Heart left ventricle (tissue), 16 donors: ENCODE measurements at regions of chr2 and their contacts with region 1.

Region 1: GRCh38 chr2:133886735-133887660 is 318.7 kb upstream of the NCKAP5 start:
- DNase-seq: peak; percentile 63 to 80 (median 67)
- ATAC-seq: peak; percentile 29 to 86 (median 79)
- H3K4me3 ChIP-seq: no peak overlapping the region
- H3K27ac ChIP-seq: no peak overlapping the region
- H3K4me1 ChIP-seq: peaks cover 0 to 12% (median 2%) of the 10 kb centered on the region in 12 donors
- H3K27me3 ChIP-seq: peaks cover 0 to 3% (median 0%) of the 10 kb centered on the region in 9 donors
- CTCF ChIP-seq: peak; percentile 41 to 72 (median 58)
- POLR2A ChIP-seq: no peak

Region 2: DNA sequence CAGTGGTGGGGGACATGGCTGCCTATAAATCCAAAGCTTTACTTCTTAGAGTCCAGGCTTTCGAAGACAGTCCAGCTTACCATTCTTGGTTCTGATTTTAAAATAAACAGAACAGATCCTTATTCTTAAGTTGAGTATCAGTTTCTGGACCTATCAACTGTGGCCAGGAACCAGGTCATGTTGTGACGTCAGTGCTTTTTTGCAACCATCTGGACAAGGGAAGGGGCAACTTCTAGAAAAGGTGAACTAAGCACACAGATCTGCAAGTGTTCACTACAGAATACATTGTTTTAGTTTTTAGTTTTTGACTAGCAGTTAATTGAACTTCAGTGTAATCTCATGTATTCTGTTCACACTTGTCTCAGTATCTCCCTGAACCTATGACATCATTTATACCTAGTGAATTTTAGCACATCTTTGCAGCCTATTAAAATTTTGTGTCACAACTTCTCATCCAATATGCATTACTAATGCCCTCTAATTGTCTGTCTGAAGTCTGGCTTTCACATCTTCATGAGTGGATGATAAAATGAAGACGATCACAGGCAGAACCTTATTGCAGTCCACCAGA is 41.0 kb after region 1 on chr2:
- intact Hi-C with region 1: no loop called
- DNase-seq: no peak
- ATAC-seq: no peak
- H3K4me3 ChIP-seq: no peak overlapping the region
- H3K27ac ChIP-seq: no peak overlapping the region
- H3K4me1 ChIP-seq: no peaks in the 10 kb centered on the region
- H3K27me3 ChIP-seq: no peaks in the 10 kb centered on the region
- CTCF ChIP-seq: no peak
- POLR2A ChIP-seq: no peak

Region 3: GRCh38 chr2:133953524-133953923 is 66.5 kb after region 1 on chr2:
- intact Hi-C with region 1: no loop called
- DNase-seq: no peak
- ATAC-seq: no peak
- H3K4me3 ChIP-seq: no peak overlapping the region
- H3K27ac ChIP-seq: no peak overlapping the region
- H3K4me1 ChIP-seq: peaks cover 0 to 40% (median 7%) of the 10 kb centered on the region in 12 donors
- H3K27me3 ChIP-seq: no peaks in the 10 kb centered on the region
- CTCF ChIP-seq: no peak
- POLR2A ChIP-seq: no peak

Region 4: GRCh38 chr2:133993160-133993559 is 106.2 kb after region 1 on chr2:
- intact Hi-C with region 1: loop called in 2 of 10 experiments (anchors 10 kb)
- DNase-seq: peak in 2 of 5 donors; percentile 45 to 53
- ATAC-seq: peak; percentile 65 to 90 (median 76)
- H3K4me3 ChIP-seq: no peak overlapping the region
- H3K27ac ChIP-seq: peak overlapping the region in 7 of 12 donors; percentile 1 to 63 (median 38)
- H3K4me1 ChIP-seq: peaks cover 0 to 17% (median 0%) of the 10 kb centered on the region in 12 donors
- H3K27me3 ChIP-seq: no peaks in the 10 kb centered on the region
- CTCF ChIP-seq: no peak
- POLR2A ChIP-seq: no peak

Region 5: GRCh38 chr2:134104754-134105153 is 217.8 kb after region 1 on chr2:
- intact Hi-C with region 1: loop called in 3 of 10 experiments (anchors 5 to 10 kb)
- DNase-seq: no peak
- ATAC-seq: peak in 1 of 4 donors; percentile 20
- H3K4me3 ChIP-seq: no peak overlapping the region
- H3K27ac ChIP-seq: no peak overlapping the region
- H3K4me1 ChIP-seq: no peaks in the 10 kb centered on the region
- H3K27me3 ChIP-seq: no peaks in the 10 kb centered on the region
- CTCF ChIP-seq: no peak
- POLR2A ChIP-seq: no peak

Region 6: DNA sequence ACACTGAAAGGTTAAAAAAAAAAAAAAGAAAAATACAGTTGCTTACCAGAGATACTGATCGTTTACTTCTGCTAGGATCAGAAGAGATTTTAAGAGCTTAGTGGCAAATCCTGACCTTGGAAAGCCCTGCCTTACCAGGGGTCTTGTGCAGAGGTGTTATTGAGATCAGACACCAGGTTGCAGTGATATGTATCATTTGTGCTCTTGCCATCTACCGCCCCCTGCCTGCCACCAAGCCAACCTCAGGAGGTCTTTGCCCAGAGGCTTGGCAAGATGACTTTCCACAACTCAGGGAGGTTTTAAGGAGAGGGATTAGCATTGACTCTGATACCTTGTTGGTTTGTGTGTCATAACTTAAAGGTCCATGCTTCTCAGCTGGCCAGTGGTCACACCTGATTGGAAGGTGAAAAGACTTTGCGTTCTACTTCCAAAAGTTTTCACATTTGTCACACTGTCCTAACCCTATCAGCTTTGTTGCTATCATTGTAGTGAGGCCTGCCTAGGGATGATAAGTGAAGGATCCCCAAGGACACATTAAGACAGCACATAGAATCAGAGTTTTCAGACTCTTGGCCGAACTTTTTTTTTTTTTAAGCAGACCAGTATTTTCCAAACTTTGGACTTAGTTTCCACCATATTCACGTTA is 320.7 kb after region 1 on chr2:
- intact Hi-C with region 1: loop called in 1 of 10 experiments (anchors 10 kb)
- DNase-seq: peak in 4 of 5 donors; percentile 52 to 60 (median 58)
- ATAC-seq: peak; percentile 75 to 83 (median 77)
- H3K4me3 ChIP-seq: no peak overlapping the region
- H3K27ac ChIP-seq: peak overlapping the region in 7 of 12 donors; percentile 9 to 45 (median 17)
- H3K4me1 ChIP-seq: peaks cover 9 to 65% (median 49%) of the 10 kb centered on the region in 12 donors
- H3K27me3 ChIP-seq: no peaks in the 10 kb centered on the region
- CTCF ChIP-seq: peak; percentile 54 to 78 (median 65)
- POLR2A ChIP-seq: no peak

Region 7: GRCh38 chr2:134253804-134254203 is 366.8 kb after region 1 on chr2 and contains the start of gene MGAT5:
- intact Hi-C with region 1: loop called in 7 of 10 experiments (anchors 5 to 10 kb)
- DNase-seq: no peak
- ATAC-seq: peak in 3 of 4 donors; percentile 6 to 61 (median 31)
- H3K4me3 ChIP-seq: no peak within 1 kb of the TSS
- H3K27ac ChIP-seq: peak within 1 kb of the TSS in 1 of 12 donors; percentile 2
- H3K4me1 ChIP-seq: peaks cover 9 to 78% (median 46%) of the 10 kb centered on the region in 12 donors
- H3K27me3 ChIP-seq: no peaks in the 10 kb centered on the region
- CTCF ChIP-seq: no peak
- POLR2A ChIP-seq: no peak
- total RNA-seq, gene MGAT5: 63.1 to 116 (median 84.5) TPM

Region 8: DNA sequence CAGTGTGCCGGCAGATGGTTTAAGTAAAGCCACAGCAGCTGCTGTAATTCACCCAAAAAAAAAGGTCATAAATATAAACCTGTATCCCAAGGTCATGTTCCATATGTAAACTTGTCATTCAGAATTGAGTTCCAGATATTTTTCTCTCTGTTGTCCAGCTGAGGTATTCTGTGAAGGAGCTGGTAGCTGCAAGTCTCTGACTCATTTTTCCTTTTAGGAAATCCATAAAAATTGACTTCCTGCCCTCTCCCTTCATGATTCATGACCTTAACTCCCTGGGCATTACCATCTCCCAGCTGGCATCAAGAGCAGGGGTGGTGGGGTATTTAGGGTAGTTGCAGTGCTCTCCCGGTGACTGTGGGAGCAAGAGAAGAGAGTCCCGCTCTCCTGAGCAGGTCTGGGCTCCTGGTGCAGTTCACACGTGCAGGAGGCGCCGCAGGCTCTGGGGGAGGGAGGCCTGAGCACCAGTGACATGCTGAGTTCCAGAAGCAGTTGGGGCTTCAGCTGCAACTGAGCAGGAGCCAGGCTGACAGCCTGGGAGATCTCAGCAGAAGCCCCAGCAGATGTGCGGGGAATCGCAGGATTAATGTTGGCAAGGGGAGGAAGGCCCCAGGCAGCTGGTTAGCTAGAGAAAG is 559.5 kb after region 1 on chr2:
- intact Hi-C with region 1: loop called in 7 of 10 experiments (anchors 2 to 10 kb)
- DNase-seq: no peak
- ATAC-seq: no peak
- H3K4me3 ChIP-seq: no peak overlapping the region
- H3K27ac ChIP-seq: peak overlapping the region in 1 of 12 donors; percentile 9
- H3K4me1 ChIP-seq: peaks cover 0 to 23% (median 7%) of the 10 kb centered on the region in 12 donors
- H3K27me3 ChIP-seq: no peaks in the 10 kb centered on the region
- CTCF ChIP-seq: no peak
- POLR2A ChIP-seq: no peak

Region 9: GRCh38 chr2:134460583-134460998 is 573.6 kb after region 1 on chr2:
- intact Hi-C with region 1: loop called in 3 of 10 experiments (anchors 10 kb)
- DNase-seq: peak; percentile 42 to 67 (median 64)
- ATAC-seq: peak; percentile 48 to 83 (median 74)
- H3K4me3 ChIP-seq: no peak overlapping the region
- H3K27ac ChIP-seq: no peak overlapping the region
- H3K4me1 ChIP-seq: peaks cover 0 to 3% (median 0%) of the 10 kb centered on the region in 12 donors
- H3K27me3 ChIP-seq: no peaks in the 10 kb centered on the region
- CTCF ChIP-seq: peak; percentile 45 to 67 (median 58)
- POLR2A ChIP-seq: no peak

Region 10: GRCh38 chr2:134975256-134975945 is 1088.4 kb after region 1 on chr2:
- intact Hi-C with region 1: no loop called
- DNase-seq: peak in 1 of 5 donors; percentile 26
- ATAC-seq: peak in 3 of 4 donors; percentile 28 to 55 (median 49)
- H3K4me3 ChIP-seq: no peak overlapping the region
- H3K27ac ChIP-seq: no peak overlapping the region
- H3K4me1 ChIP-seq: peaks cover 0 to 10% (median 0%) of the 10 kb centered on the region in 12 donors
- H3K27me3 ChIP-seq: no peaks in the 10 kb centered on the region
- CTCF ChIP-seq: no peak
- POLR2A ChIP-seq: no peak